PC-9 (cell line): ENCODE measurements at regions of chr17 and their contacts with region 1.

Region 1: GRCh38 chr17:50712641-50713040 is 4.9 kb upstream of the ANKRD40 start:
- DNase-seq: no peak
- H3K4me3 ChIP-seq: no peak overlapping the region
- H3K27ac ChIP-seq: no peak overlapping the region
- H3K4me1 ChIP-seq: peaks cover 41% of the 10 kb centered on the region
- H3K27me3 ChIP-seq: no peaks in the 10 kb centered on the region
- CTCF ChIP-seq: no peak

Region 2: DNA sequence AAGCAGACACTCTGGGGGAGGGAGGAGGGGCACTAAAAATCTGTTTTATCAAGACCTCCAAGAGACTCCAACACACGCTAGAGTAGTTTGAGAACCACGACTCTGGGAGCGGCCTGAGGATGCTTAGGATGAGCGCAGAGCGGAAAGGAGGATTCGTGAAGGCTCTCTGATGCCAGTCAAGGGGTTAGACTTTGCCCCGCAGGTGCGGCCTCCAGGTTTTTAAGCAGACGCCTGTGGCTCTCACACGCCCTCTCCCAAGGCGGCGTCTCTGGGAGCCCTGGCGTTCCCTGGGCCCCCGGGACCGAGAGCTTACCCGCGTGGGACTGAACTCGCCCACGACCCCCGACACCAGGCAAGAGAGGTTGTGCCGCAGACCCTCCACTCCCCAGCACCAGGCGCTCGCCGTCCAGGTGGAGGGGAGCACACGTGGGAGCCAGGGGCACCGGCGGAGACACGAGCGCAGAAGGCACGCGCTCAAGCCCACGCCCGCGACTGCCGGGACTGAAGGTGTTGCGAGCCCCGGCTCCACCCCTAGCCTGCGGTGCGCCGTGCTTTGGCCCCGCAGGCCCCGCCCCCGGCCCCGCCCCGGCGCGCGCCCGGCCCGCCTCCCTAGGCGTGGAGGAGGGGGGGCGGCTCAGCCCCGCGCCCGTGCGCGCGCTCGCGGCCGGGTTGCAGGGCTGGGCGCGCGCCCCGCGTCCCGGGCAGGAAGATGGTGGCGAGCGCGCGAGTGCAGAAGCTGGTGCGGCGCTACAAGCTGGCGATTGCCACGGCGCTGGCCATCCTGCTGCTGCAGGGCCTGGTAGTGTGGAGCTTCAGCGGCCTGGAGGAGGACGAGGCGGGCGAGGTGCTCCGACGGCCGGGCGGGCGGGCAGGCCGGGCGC is 367.0 kb before region 1 on chr17 and contains the start of gene XYLT2:
- CTCF ChIA-PET with region 1: no interaction called
- POLR2A ChIA-PET with region 1: interaction called, 26 read pairs
- intact Hi-C with region 1: no loop called
- DNase-seq: peak; percentile 38 to 86
- H3K4me3 ChIP-seq: peak within 1 kb of the TSS; percentile 61
- H3K27ac ChIP-seq: no peak within 1 kb of the TSS
- H3K4me1 ChIP-seq: 0 out of 2 replicates have a peak, but pooled peaks cover 8% of the 10 kb centered on the region
- H3K27me3 ChIP-seq: no peaks in the 10 kb centered on the region
- CTCF ChIP-seq: no peak
- total RNA-seq, gene XYLT2: 34.0 and 37.5 TPM in 2 replicates

Region 3: DNA sequence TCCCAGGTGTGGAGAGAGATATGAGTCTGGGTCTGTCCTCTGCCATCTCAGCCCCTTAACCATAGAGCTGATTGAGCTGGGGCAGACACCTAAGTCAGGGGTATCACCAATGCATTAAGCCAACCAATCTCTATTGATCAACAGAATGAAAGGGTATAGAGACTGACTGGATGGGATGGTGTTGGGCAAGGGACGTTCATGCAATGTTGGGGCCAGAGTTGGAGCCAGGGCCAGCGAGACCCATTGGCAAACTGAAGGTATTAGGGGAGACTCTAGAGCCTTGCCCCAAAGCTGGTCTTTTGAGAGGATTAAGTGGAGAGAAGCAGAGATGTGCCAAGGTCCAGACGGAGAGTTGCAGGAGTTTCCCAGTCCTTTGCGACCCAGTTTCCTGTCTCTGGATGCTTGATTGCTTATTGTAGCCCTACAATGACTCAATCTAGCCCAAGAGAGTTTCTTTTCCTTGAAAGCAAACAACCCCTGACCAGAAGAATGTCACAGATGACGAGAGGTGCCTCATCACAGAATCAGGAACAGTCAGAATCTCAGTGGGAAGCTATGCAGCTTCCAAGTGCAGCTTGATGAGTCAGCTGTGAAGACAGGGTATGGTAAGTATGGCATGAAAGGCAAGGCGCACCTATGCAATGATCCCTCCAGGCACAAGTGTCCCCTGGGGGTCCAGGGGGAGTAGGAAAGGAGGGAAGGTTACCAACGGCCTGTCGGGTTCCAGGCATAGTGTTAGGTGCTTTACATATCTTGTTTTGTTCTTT is 684.9 kb after region 1 on chr17:
- CTCF ChIA-PET with region 1: no interaction called
- POLR2A ChIA-PET with region 1: no interaction called
- intact Hi-C with region 1: no loop called
- DNase-seq: peak in 1 of 2 experiments; percentile 44
- H3K4me3 ChIP-seq: no peak overlapping the region
- H3K27ac ChIP-seq: no peak overlapping the region
- H3K4me1 ChIP-seq: no peaks in the 10 kb centered on the region
- H3K27me3 ChIP-seq: peaks cover 94% of the 10 kb centered on the region
- CTCF ChIP-seq: no peak